AG04450 (cell line): ENCODE measurements at regions of chr16 and their contacts with region 1.

Region 1: GRCh38 chr16:80369138-80369958 is 171.4 kb upstream of the DYNLRB2 start:
- DNase-seq: peak; percentile 38
- H3K4me3 ChIP-seq: no peak overlapping the region
- H3K27ac ChIP-seq: no peak overlapping the region
- H3K27me3 ChIP-seq: no peaks in the 10 kb centered on the region
- CTCF ChIP-seq: peak; percentile 85

Region 2: GRCh38 chr16:79997257-79997656 is 372.1 kb before region 1 on chr16:
- CTCF ChIA-PET with region 1: interaction called, 69 read pairs
- POLR2A ChIA-PET with region 1: no interaction called
- DNase-seq: peak; percentile 2
- H3K4me3 ChIP-seq: no peak overlapping the region
- H3K27ac ChIP-seq: no peak overlapping the region
- H3K27me3 ChIP-seq: no peaks in the 10 kb centered on the region
- CTCF ChIP-seq: peak; percentile 70

Region 3: GRCh38 chr16:80006241-80007215 is 362.8 kb before region 1 on chr16:
- CTCF ChIA-PET with region 1: interaction called, 12 read pairs
- POLR2A ChIA-PET with region 1: no interaction called
- DNase-seq: no peak
- H3K4me3 ChIP-seq: no peak overlapping the region
- H3K27ac ChIP-seq: no peak overlapping the region
- H3K27me3 ChIP-seq: no peaks in the 10 kb centered on the region
- CTCF ChIP-seq: no peak